H1 (cell line): ENCODE measurements at regions of chr10 and their contacts with region 1.

Region 1: DNA sequence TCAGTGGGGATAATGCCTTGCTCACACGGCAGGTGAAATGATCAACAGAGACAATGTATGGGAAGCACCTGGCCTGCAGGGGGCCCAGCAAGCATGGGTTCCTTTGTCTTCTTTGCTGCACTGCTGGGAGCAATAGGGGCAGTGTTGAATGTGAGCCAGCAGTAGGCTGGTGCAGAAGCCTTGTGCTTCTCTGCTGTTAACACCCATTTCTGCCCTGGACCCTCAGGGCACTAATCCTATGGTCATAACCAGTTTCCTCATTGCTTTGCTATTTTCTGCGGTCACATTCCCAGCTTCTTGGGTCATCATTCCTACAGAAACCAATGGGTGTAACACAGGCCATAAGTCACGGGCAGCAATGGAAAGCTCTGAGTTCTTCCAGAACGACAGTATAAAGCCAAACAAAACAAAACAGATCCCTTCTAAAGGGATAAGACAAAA is 10.9 kb upstream of the LGI1 start:
- DNase-seq: peak; percentile 66 to 80
- H3K4me3 ChIP-seq: no peak overlapping the region
- H3K27ac ChIP-seq: no peak overlapping the region
- H3K4me1 ChIP-seq: peaks cover 9 to 30% (median 24%) of the 10 kb centered on the region in 4 experiments
- H3K27me3 ChIP-seq: no peaks in the 10 kb centered on the region
- CTCF ChIP-seq: peak; percentile 57 to 73 (median 67)
- EP300 ChIP-seq: no peak
- POLR2A ChIP-seq: no peak
- RAD21 ChIP-seq: peak; percentile 52 to 66

Region 2: GRCh38 chr10:93224005-93224779 is 522.7 kb before region 1 on chr10:
- CTCF ChIA-PET with region 1: no interaction called
- POLR2A ChIA-PET with region 1: no interaction called
- DNase-seq: no peak
- H3K4me3 ChIP-seq: no peak overlapping the region
- H3K27ac ChIP-seq: no peak overlapping the region
- H3K4me1 ChIP-seq: no peaks in the 10 kb centered on the region; a peak in 1 of 7 replicates
- H3K27me3 ChIP-seq: no peaks in the 10 kb centered on the region
- CTCF ChIP-seq: peak; percentile 12 to 25 (median 18); a peak in 3 of 4 replicates
- EP300 ChIP-seq: no peak
- POLR2A ChIP-seq: no peak
- RAD21 ChIP-seq: peak; percentile 39 to 57

Region 3: GRCh38 chr10:93554760-93555432 is 192.0 kb before region 1 on chr10:
- CTCF ChIA-PET with region 1: interaction called, 21 read pairs
- POLR2A ChIA-PET with region 1: no interaction called
- DNase-seq: peak; percentile 58 to 93
- H3K4me3 ChIP-seq: no peak overlapping the region
- H3K27ac ChIP-seq: no peak overlapping the region
- H3K4me1 ChIP-seq: peaks cover 0 to 4% (median 1%) of the 10 kb centered on the region in 4 experiments; a peak in 2 of 7 replicates
- H3K27me3 ChIP-seq: no peaks in the 10 kb centered on the region
- CTCF ChIP-seq: peak; percentile 78 to 96 (median 93)
- EP300 ChIP-seq: no peak
- POLR2A ChIP-seq: no peak
- RAD21 ChIP-seq: peak; percentile 77 to 78

Region 4: GRCh38 chr10:93726024-93726423 is 20.8 kb before region 1 on chr10:
- CTCF ChIA-PET with region 1: interaction called, 64 read pairs
- POLR2A ChIA-PET with region 1: no interaction called
- DNase-seq: no peak
- H3K4me3 ChIP-seq: no peak overlapping the region
- H3K27ac ChIP-seq: no peak overlapping the region
- H3K4me1 ChIP-seq: no peaks in the 10 kb centered on the region
- H3K27me3 ChIP-seq: peaks cover 0 to 1% (median 0%) of the 10 kb centered on the region in 4 experiments; a peak in 1 of 7 replicates
- CTCF ChIP-seq: no peak
- EP300 ChIP-seq: no peak
- POLR2A ChIP-seq: no peak
- RAD21 ChIP-seq: no peak

Region 5: DNA sequence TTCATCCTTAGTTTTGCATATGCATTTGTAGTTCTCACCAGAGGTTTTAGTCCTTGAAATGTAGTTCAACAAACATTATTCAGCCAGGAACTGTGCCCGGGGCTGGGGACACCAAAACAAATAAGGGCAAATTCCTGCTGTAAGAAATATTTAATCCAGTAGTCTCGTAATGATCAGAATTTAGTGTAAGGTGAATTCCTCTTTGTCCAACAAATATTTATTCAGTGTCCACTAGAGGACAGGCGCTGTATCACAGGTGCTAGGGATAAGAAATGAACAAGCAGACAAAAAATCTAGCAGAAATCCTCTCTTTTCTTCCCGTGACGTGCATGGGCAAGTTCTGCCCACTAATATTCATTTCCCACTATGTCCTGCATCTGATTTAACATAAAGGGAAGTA is 28.5 kb after region 1 on chr10:
- CTCF ChIA-PET with region 1: interaction called, 91 read pairs
- POLR2A ChIA-PET with region 1: no interaction called
- DNase-seq: no peak
- H3K4me3 ChIP-seq: no peak overlapping the region
- H3K27ac ChIP-seq: no peak overlapping the region
- H3K4me1 ChIP-seq: peaks cover 0 to 3% (median under 1%) of the 10 kb centered on the region in 4 experiments; a peak in 2 of 7 replicates
- H3K27me3 ChIP-seq: no peaks in the 10 kb centered on the region
- CTCF ChIP-seq: no peak
- EP300 ChIP-seq: no peak
- POLR2A ChIP-seq: no peak
- RAD21 ChIP-seq: no peak

Region 6: GRCh38 chr10:93799155-93799708 is 52.4 kb after region 1 on chr10:
- CTCF ChIA-PET with region 1: interaction called, 89 read pairs
- POLR2A ChIA-PET with region 1: interaction called, 3 read pairs
- DNase-seq: no peak
- H3K4me3 ChIP-seq: no peak overlapping the region
- H3K27ac ChIP-seq: no peak overlapping the region
- H3K4me1 ChIP-seq: peaks cover 0 to 2% (median 0%) of the 10 kb centered on the region in 4 experiments; a peak in 3 of 7 replicates
- H3K27me3 ChIP-seq: 0 out of 7 replicates have a peak, but pooled peaks cover 0 to 2% (median 0%) of the 10 kb centered on the region in 4 experiments
- CTCF ChIP-seq: no peak
- EP300 ChIP-seq: no peak
- POLR2A ChIP-seq: no peak
- RAD21 ChIP-seq: no peak

Region 7: GRCh38 chr10:93827056-93827804 is 80.4 kb after region 1 on chr10:
- CTCF ChIA-PET with region 1: interaction called, 17 read pairs
- POLR2A ChIA-PET with region 1: no interaction called
- DNase-seq: no peak
- H3K4me3 ChIP-seq: no peak overlapping the region
- H3K27ac ChIP-seq: no peak overlapping the region
- H3K4me1 ChIP-seq: peaks cover 0 to 2% (median 0%) of the 10 kb centered on the region in 4 experiments; a peak in 1 of 7 replicates
- H3K27me3 ChIP-seq: no peaks in the 10 kb centered on the region; a peak in 2 of 7 replicates
- CTCF ChIP-seq: no peak
- EP300 ChIP-seq: no peak
- POLR2A ChIP-seq: no peak
- RAD21 ChIP-seq: no peak